SK-MEL-5 (cell line): ENCODE measurements at regions of chr7 and their contacts with region 1.

Region 1: GRCh38 chr7:90403174-90404113 is at the start of gene CLDN12:
- DNase-seq: peak; percentile 99
- total RNA-seq, gene CLDN12: 143 and 151 TPM in 2 replicates

Region 2: GRCh38 chr7:90312745-90313144 is 90.7 kb before region 1 on chr7:
- in situ Hi-C with region 1: loop called (anchors 25 kb)
- DNase-seq: peak; percentile 48